Activated CD8-positive, alpha-beta memory T cell treated with anti-CD3 and anti-CD28 coated beads, Interleukin-2, amount 10 ng/mL, durations not matched to agents 7 days and 5 days (primary cell): ENCODE measurements at regions of chr9 and their contacts with region 1.

Region 1: GRCh38 chr9:36102742-36103495 is 33.6 kb upstream of the GLIPR2 start:
- DNase-seq: peak; percentile 91
- ATAC-seq: peak; percentile 100
- H3K4me3 Mint-ChIP-seq: no peak overlapping the region
- H3K27ac Mint-ChIP-seq: no peak overlapping the region
- H3K4me1 Mint-ChIP-seq: peaks cover 7% of the 10 kb centered on the region
- H3K27me3 Mint-ChIP-seq: no peaks in the 10 kb centered on the region

Region 2: GRCh38 chr9:36008774-36009300 is 94.1 kb before region 1 on chr9:
- CTCF ChIA-PET with region 1: interaction called, 32 read pairs
- DNase-seq: peak; percentile 82
- ATAC-seq: peak; percentile 98
- H3K4me3 Mint-ChIP-seq: no peak overlapping the region
- H3K27ac Mint-ChIP-seq: no peak overlapping the region
- H3K4me1 Mint-ChIP-seq: peaks cover 19% of the 10 kb centered on the region
- H3K27me3 Mint-ChIP-seq: peaks cover 54% of the 10 kb centered on the region

Region 3: DNA sequence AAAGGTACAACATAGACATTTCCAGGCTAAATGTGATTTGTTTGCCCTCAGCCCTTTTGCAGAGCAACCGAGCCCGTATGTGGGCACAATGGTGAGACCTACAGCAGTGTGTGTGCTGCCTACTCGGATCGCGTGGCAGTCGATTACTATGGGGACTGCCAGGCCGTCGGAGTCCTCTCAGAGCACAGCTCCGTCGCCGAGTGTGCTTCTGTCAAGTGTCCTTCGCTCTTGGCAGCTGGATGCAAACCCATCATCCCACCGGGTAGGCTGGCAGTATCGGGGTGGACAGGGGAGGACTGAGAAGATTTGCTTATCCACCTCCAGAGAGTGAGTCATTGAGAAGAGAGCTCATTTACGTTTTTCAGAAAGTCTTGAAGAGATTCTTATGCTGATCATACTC is 15.8 kb after region 1 on chr9:
- CTCF ChIA-PET with region 1: interaction called, 24 read pairs
- DNase-seq: no peak
- ATAC-seq: no peak
- H3K4me3 Mint-ChIP-seq: no peak overlapping the region
- H3K27ac Mint-ChIP-seq: no peak overlapping the region
- H3K4me1 Mint-ChIP-seq: no peaks in the 10 kb centered on the region
- H3K27me3 Mint-ChIP-seq: no peaks in the 10 kb centered on the region

Region 4: DNA sequence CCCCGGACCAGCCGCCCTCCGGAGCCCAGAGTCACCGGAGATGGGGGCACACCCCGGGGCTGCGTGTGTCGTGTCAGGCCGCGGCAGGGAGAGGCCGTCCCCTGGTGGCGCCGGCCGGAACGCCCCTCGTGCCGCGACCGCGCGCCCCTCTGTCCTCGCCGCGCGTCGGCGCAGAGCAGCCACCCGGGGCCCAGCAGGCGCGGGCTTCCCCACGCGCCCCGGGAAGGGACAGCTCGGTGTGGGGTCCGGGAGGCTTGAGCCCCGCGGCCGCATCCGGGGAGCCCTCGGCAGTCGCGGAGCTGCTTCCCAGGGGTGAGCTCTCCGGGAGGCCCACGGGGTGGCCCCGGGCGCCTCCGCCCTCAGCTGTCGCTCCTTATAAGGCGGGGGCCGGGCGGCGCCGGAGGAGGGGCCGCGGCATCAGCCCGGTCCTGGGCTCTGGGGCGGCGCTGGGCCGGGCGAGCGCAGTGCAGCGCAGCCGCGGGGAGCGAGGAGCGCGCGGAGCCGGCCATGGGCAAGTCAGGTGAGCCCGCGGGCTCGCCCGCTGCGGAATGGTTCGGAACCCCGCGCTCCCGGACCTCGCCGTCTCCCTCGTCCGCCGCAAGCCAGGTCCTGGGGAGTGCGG is 33.5 kb after region 1 on chr9 and contains the start of gene GLIPR2:
- CTCF ChIA-PET with region 1: interaction called, 16 read pairs
- DNase-seq: peak; percentile 85
- ATAC-seq: peak; percentile 99
- H3K4me3 Mint-ChIP-seq: peak within 1 kb of the TSS; percentile 99
- H3K27ac Mint-ChIP-seq: peak within 1 kb of the TSS; percentile 66
- H3K4me1 Mint-ChIP-seq: peaks cover 46% of the 10 kb centered on the region
- H3K27me3 Mint-ChIP-seq: peaks cover 19% of the 10 kb centered on the region
- total RNA-seq, gene GLIPR2: 28.4 to 49.8 TPM

Region 5: GRCh38 chr9:36148311-36149051 is 45.6 kb after region 1 on chr9:
- CTCF ChIA-PET with region 1: interaction called, 15 read pairs
- DNase-seq: peak; percentile 92
- ATAC-seq: peak; percentile 43
- H3K4me3 Mint-ChIP-seq: no peak overlapping the region
- H3K27ac Mint-ChIP-seq: peak overlapping the region; percentile 69
- H3K4me1 Mint-ChIP-seq: peaks cover 90% of the 10 kb centered on the region
- H3K27me3 Mint-ChIP-seq: no peaks in the 10 kb centered on the region

Region 6: DNA sequence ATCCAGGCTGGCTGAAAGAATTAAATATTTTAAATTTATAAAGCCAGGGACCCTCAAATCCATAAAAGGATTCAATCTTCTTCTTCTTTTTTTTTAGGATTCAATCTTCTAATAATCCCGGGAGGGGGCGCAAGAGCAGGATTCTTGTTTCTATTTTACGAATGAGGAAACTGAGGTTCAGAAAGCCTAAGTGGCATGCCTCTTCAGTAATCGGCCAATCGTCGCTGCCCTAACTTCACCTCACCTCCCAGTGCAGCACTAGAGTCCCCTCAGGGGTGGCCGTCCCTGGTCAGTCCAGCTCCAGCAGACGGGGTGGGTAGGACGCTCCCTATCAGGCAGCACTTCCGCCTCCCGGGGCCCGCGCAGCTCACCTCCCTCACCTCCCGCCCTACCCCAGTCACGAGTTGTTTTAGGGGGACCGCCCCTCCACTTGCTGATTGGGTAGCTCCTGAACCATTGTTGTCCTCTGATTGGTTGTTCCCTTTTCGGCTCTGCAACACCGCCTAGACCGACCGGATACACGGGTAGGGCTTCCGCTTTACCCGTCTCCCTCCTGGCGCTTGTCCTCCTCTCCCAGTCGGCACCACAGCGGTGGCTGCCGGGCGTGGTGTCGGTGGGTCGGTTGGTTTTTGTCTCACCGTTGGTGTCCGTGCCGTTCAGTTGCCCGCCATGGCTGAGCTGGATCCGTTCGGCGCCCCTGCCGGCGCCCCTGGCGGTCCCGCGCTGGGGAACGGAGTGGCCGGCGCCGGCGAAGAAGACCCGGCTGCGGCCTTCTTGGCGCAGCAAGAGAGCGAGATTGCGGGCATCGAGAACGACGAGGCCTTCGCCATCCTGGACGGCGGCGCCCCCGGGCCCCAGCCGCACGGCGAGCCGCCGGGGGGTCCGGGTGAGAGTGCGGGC is 87.7 kb after region 1 on chr9 and contains the start of gene CLTA:
- CTCF ChIA-PET with region 1: interaction called, 34 read pairs
- DNase-seq: peak; percentile 98
- ATAC-seq: peak; percentile 98
- H3K4me3 Mint-ChIP-seq: peak within 1 kb of the TSS; percentile 99
- H3K27ac Mint-ChIP-seq: peak within 1 kb of the TSS; percentile 93
- H3K4me1 Mint-ChIP-seq: peaks cover 59% of the 10 kb centered on the region
- H3K27me3 Mint-ChIP-seq: peaks cover 3% of the 10 kb centered on the region
- total RNA-seq, gene CLTA: 156 to 177 TPM